PC-9 (cell line): ENCODE measurements at regions of chr9 and their contacts with region 1.

Region 1: DNA sequence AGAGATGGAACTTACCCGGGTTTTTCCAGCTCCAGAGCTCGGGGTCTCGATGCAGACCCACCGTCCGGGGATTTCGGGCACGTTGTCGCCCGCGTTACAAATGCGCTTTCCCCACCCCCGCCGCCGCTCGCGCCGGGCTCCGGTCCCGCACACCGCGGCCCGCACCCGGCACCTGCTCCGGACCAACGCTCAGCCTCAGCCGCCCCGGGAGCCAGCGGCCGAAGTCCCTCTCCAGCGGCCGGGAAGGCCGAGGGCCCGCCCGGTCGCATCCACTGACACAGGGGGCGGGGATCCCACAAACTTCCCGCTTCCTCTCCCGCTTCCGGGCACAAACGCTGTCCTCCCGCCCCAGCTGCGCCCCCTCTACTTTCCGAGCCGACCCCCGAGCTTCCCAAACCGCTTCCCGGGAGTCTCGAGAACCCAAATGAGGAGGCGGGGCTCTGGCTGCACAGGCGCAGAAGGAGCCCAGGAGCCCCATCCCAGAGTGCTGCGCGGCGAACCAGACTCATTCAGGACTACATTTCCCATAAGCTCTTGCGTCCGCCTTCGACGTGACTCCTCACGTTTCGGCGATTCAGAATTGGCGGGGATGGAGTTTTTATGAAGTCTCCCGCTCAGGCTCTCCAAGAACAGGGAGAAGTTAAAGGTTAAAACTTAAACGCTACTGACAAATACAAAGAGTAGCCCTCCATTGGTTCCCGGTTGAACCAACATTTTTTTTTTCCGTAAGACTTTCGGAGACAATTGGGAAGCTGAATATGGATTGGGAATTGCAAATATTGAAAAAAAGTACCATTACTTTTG is at the start of gene ZNF782:
- DNase-seq: peak; percentile 85 to 92
- H3K4me3 ChIP-seq: peak within 1 kb of the TSS; percentile 94
- H3K27ac ChIP-seq: no peak within 1 kb of the TSS
- H3K4me1 ChIP-seq: peaks cover 37% of the 10 kb centered on the region
- H3K27me3 ChIP-seq: no peaks in the 10 kb centered on the region
- CTCF ChIP-seq: no peak
- total RNA-seq, gene ZNF782: 7.2 and 11.5 TPM in 2 replicates

Region 2: GRCh38 chr9:96686548-96687335 is 167.5 kb before region 1 on chr9:
- CTCF ChIA-PET with region 1: no interaction called
- POLR2A ChIA-PET with region 1: no interaction called
- intact Hi-C with region 1: loop called (anchors 5 kb)
- DNase-seq: peak; percentile 53 to 91
- H3K4me3 ChIP-seq: peak overlapping the region; percentile 56
- H3K27ac ChIP-seq: no peak overlapping the region
- H3K4me1 ChIP-seq: peaks cover 3% of the 10 kb centered on the region; the same call in 1 of the 2 replicates
- H3K27me3 ChIP-seq: no peaks in the 10 kb centered on the region
- CTCF ChIP-seq: peak; percentile 66

Region 3: DNA sequence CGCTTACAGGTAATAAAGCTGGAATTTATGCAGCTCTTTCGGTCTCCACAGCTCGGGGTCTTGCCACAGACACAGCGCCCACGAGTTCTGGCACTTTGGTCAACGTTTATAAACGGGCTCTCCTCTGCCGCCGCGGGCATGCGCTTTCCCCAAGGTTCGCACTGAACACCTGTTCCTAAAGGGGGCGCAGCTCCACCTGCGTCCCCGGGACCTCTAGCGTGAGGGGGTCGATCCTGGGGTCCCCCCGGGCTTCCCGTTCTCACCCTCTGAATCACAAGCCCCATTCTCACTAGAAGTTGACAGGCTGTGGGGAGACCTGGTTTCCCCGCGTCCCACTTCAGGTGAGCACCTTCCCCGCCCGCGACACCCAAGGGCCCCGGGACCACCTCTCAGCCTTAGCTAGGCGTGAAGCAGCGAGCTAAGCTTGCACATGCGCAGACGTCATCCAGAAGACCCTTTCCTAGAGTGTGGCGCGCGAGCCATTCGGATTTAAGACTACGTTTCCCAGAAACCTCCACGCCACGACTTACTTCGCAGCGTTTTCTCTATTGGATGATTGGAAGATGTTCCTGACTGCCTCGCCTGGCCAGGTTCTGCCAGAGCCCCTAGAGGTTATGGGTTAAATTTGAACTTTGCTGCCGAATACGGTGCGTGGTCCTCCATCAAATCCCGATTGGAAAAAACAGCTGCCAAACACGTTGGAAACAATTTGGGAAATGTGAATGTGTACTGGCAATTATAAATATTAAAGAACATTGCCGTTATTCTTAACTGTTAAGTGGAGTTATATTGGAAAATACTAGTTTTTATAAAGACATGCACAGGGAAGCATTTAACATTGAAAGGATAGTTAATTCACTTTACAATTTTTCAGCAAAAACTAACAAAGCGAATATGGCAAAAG is 21.4 kb after region 1 on chr9:
- CTCF ChIA-PET with region 1: interaction called, 6 read pairs
- POLR2A ChIA-PET with region 1: interaction called, 6 read pairs
- intact Hi-C with region 1: loop called (anchors 1 kb)
- DNase-seq: peak; percentile 68 to 77
- H3K4me3 ChIP-seq: peak overlapping the region; percentile 91
- H3K27ac ChIP-seq: peak overlapping the region; percentile 83
- H3K4me1 ChIP-seq: peaks cover 17% of the 10 kb centered on the region
- H3K27me3 ChIP-seq: no peaks in the 10 kb centered on the region
- CTCF ChIP-seq: peak; percentile 52; the same call in 1 of the 2 replicates

Region 4: GRCh38 chr9:96892131-96892530 is 37.9 kb after region 1 on chr9:
- CTCF ChIA-PET with region 1: no interaction called
- POLR2A ChIA-PET with region 1: no interaction called
- intact Hi-C with region 1: no loop called
- DNase-seq: no peak
- H3K4me3 ChIP-seq: no peak overlapping the region
- H3K27ac ChIP-seq: no peak overlapping the region
- H3K4me1 ChIP-seq: no peaks in the 10 kb centered on the region
- H3K27me3 ChIP-seq: no peaks in the 10 kb centered on the region
- CTCF ChIP-seq: no peak

Region 5: GRCh38 chr9:97062417-97062985 is 208.2 kb after region 1 on chr9:
- CTCF ChIA-PET with region 1: no interaction called
- POLR2A ChIA-PET with region 1: no interaction called
- intact Hi-C with region 1: loop called (anchors 1 kb)
- DNase-seq: peak; percentile 66 to 98
- H3K4me3 ChIP-seq: no peak overlapping the region
- H3K27ac ChIP-seq: peak overlapping the region; percentile 79
- H3K4me1 ChIP-seq: peaks cover 40% of the 10 kb centered on the region
- H3K27me3 ChIP-seq: no peaks in the 10 kb centered on the region
- CTCF ChIP-seq: no peak

Region 6: DNA sequence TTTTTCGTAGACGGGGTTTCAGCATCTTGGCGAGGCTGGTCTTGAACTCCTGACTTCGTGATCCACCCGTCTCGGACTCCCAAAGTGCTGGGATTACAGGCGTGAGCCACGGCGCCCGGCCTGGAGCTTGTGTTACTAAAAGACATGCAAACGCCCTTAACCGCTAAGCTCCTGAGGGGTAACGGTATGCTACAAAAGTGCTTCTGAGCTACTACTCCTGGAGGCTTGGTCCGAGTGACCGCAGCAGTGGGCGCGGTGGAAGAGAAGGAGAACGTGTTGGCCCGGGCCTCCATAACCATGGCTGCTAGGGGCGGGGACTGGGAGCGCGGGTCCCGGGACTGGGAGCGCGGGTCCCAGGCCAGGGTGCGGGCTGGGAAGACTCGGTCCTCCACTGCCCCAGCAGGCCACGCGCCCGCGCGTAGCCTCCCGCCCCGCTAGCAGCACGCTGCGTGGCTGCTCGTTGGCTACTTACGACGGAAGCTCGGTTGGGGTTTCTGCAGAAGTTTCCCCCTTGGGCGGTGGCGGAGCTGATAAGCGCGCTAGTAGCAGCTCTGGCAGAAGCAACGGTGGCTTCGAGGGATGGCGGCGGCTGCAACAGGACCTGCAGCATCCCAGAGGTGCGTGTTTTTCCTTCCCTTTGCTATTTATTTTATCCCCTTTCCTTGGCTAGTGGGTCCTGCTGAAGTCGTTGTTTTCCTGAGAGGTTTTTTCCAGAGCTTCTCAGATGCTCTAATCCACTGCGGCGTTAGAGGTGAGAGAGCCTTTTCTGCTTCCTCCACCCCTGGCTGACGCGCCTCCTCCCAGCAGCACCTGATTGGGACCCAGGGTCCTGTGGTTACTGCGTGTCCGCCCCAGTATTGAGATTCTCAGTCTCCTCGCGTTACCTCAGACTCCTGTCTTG is 383.9 kb after region 1 on chr9:
- CTCF ChIA-PET with region 1: no interaction called
- POLR2A ChIA-PET with region 1: interaction called, 4 read pairs
- intact Hi-C with region 1: loop called (anchors 5 kb)
- DNase-seq: peak; percentile 63 to 84
- H3K4me3 ChIP-seq: peak overlapping the region; percentile 64
- H3K27ac ChIP-seq: peak overlapping the region; percentile 16; the same call in 1 of the 2 replicates
- H3K4me1 ChIP-seq: no peaks in the 10 kb centered on the region
- H3K27me3 ChIP-seq: no peaks in the 10 kb centered on the region
- CTCF ChIP-seq: no peak

Region 7: GRCh38 chr9:97468658-97469448 is 614.6 kb after region 1 on chr9:
- CTCF ChIA-PET with region 1: no interaction called
- POLR2A ChIA-PET with region 1: no interaction called
- intact Hi-C with region 1: loop called (anchors 2 kb)
- DNase-seq: peak in 1 of 2 experiments; percentile 67
- H3K4me3 ChIP-seq: no peak overlapping the region
- H3K27ac ChIP-seq: no peak overlapping the region
- H3K4me1 ChIP-seq: no peaks in the 10 kb centered on the region
- H3K27me3 ChIP-seq: no peaks in the 10 kb centered on the region
- CTCF ChIP-seq: peak; percentile 85

Region 8: GRCh38 chr9:97632985-97633858 is 778.9 kb after region 1 on chr9 and contains the starts of genes NCBP1 and TSTD2:
- CTCF ChIA-PET with region 1: no interaction called
- POLR2A ChIA-PET with region 1: no interaction called
- intact Hi-C with region 1: loop called (anchors 1 kb)
- DNase-seq: peak; percentile 94 to 98
- H3K4me3 ChIP-seq: peak within 1 kb of the TSS; percentile 95
- H3K27ac ChIP-seq: peak within 1 kb of the TSS; percentile 99
- H3K4me1 ChIP-seq: peaks cover 38% of the 10 kb centered on the region
- H3K27me3 ChIP-seq: no peaks in the 10 kb centered on the region
- CTCF ChIP-seq: no peak
- total RNA-seq, gene NCBP1: 38.6 and 40.2 TPM in 2 replicates
- total RNA-seq, gene TSTD2: 17.0 and 19.3 TPM in 2 replicates